ENCODE measurements at regions of chr9 and their contacts with region 1.

Region 1: GRCh38 chr9:100437860-100438805 is 11.2 kb downstream of the MSANTD3 start:
- DNase-seq: peak; percentile 43 to 66
- ATAC-seq: peak in 1 of 2 donors; percentile 28
- H3K4me3 ChIP-seq: no peak overlapping the region
- H3K27ac ChIP-seq: peak overlapping the region; percentile 71 to 83 (median 75)
- H3K4me1 ChIP-seq: peaks cover 19 to 23% of the 10 kb centered on the region in 2 donors
- H3K27me3 ChIP-seq: no peaks in the 10 kb centered on the region
- CTCF ChIP-seq: peak; percentile 82 to 95 (median 84)
- POLR2A ChIP-seq: no peak

Region 2: GRCh38 chr9:100466171-100466827 is 28.2 kb after region 1 on chr9:
- in situ Hi-C with region 1: no loop called
- intact Hi-C with region 1: loop called (anchors 1 kb)
- DNase-seq: peak; percentile 71 to 82
- ATAC-seq: peak; percentile 100
- H3K4me3 ChIP-seq: no peak overlapping the region
- H3K27ac ChIP-seq: peak overlapping the region; percentile 66 to 83 (median 71)
- H3K4me1 ChIP-seq: peaks cover 37 to 38% of the 10 kb centered on the region in 2 donors
- H3K27me3 ChIP-seq: no peaks in the 10 kb centered on the region
- CTCF ChIP-seq: no peak
- POLR2A ChIP-seq: no peak

Region 3: DNA sequence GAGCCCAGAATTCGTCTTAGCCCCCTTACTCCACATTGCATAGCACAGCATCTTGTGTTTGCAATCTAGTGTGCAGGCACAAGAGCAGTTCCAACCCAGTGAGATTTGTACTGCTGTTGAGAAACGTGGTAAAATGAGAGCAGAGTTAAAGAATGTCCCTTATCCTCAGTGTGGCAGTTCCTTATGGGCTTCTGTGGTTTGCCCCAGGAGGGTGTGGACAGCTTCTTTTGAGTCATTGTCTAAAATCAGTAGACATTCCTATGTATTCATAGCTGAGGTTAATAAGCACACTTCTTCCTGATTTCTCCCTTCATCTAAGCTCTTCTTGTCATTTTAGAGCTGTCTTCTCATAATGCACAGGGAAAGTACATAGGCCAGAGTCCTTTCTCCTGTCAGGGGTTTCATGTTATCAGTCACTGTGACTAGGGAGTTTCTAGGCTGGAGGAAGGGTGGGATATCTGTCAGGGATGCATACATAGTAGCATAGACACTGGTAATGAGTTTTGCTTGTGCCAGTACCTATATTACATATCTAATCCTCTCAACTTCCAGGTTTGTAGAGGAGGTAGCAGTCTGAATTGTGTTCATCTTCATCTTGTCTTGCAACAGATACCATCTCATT is 137.7 kb after region 1 on chr9:
- in situ Hi-C with region 1: loop called in 3 of 4 experiments (anchors 10 to 25 kb)
- intact Hi-C with region 1: loop called (anchors 2 kb)
- DNase-seq: no peak
- ATAC-seq: no peak
- H3K4me3 ChIP-seq: no peak overlapping the region
- H3K27ac ChIP-seq: peak overlapping the region; percentile 80 to 94 (median 88)
- H3K4me1 ChIP-seq: peaks cover 22 to 25% of the 10 kb centered on the region in 2 donors
- H3K27me3 ChIP-seq: no peaks in the 10 kb centered on the region
- CTCF ChIP-seq: no peak
- POLR2A ChIP-seq: no peak

Region 4: DNA sequence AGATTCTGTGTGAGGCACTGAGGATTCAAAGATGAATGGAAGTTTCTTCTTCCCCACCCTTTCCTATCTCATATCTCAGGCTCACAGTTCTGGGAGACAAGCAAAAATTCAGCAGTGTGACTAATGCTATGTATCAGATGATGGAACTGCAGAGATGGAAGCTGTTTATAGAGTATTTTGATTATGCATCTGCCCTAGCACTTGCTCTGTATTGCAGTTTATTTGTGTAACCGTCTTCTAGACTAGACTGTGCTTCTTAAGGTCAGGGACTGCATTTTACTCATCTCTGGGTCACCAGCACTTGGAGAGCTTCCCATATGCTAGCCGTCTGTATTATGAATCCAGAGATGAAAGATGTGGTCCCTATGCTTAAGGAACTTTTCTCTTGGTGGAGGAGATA is 152.3 kb after region 1 on chr9:
- in situ Hi-C with region 1: loop called (anchors 10 to 25 kb)
- intact Hi-C with region 1: no loop called
- DNase-seq: no peak
- ATAC-seq: no peak
- H3K4me3 ChIP-seq: no peak overlapping the region
- H3K27ac ChIP-seq: peak overlapping the region in 3 of 4 donors; percentile 47 to 62 (median 57)
- H3K4me1 ChIP-seq: peaks cover 9 to 15% of the 10 kb centered on the region in 2 donors
- H3K27me3 ChIP-seq: no peaks in the 10 kb centered on the region
- CTCF ChIP-seq: no peak
- POLR2A ChIP-seq: no peak

Region 5: DNA sequence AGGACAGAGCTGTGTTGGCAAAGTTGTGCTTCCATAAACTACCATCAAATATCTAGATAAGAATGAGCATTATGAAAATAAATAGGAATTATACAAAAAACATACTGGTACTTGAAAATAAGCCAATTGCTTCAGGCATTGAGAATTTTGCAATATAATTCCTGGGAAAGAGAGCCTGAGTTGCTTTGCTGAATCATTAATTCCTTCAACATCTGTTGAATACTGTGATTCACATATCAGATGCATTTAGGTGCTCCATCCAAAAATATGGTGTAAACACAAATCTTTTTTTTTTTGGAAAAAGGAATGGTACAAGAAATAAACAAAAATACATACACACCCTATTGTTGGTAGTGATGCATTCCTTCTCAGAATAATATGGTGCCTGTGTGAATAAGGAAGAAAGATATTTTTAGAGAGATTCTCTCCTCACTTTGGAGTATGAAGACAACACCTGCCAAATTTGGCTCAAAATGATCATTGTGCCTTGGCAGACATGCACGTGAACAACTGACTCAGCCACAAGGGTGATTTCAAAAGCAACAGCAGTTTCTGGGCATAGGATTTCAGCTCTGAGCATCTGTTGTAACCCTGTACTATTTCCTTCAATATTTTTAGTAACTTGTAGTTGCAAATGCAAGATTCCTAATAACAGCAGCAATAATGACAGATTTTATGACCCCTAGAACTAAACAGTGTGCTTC is 236.4 kb after region 1 on chr9:
- in situ Hi-C with region 1: no loop called
- intact Hi-C with region 1: loop called (anchors 2 kb)
- DNase-seq: peak; percentile 71 to 80
- ATAC-seq: peak; percentile 99 to 100
- H3K4me3 ChIP-seq: no peak overlapping the region
- H3K27ac ChIP-seq: peak overlapping the region; percentile 10 to 70 (median 57)
- H3K4me1 ChIP-seq: peaks cover 5 to 20% of the 10 kb centered on the region in 2 donors
- H3K27me3 ChIP-seq: no peaks in the 10 kb centered on the region
- CTCF ChIP-seq: no peak
- POLR2A ChIP-seq: no peak